Naive thymus-derived CD4-positive, alpha-beta T cell (primary cell): ENCODE measurements at regions of chr7 and their contacts with region 1.

Region 1: GRCh38 chr7:151519765-151520418 is at the start of gene RHEB:
- DNase-seq: peak; percentile 93 to 99 (median 98)
- ATAC-seq: peak; percentile 91
- H3K4me3 ChIP-seq: peak within 1 kb of the TSS; percentile 91
- H3K4me3 Mint-ChIP-seq: peak within 1 kb of the TSS; percentile 87 to 97 (median 94)
- H3K27ac ChIP-seq: peak within 1 kb of the TSS; percentile 88
- H3K27ac Mint-ChIP-seq: peak within 1 kb of the TSS; percentile 94 to 99 (median 98)
- H3K4me1 ChIP-seq: peaks cover 24 to 26% of the 10 kb centered on the region in 2 donors
- H3K4me1 Mint-ChIP-seq: peaks cover 32 to 44% (median 36%) of the 10 kb centered on the region in 7 donors
- H3K27me3 ChIP-seq: no peaks in the 10 kb centered on the region
- H3K27me3 Mint-ChIP-seq: peaks cover 0 to 12% (median 0%) of the 10 kb centered on the region in 5 donors
- total RNA-seq, gene RHEB: 31.2 to 62.6 (median 40.2) TPM

Region 2: GRCh38 chr7:151226875-151227782 is 292.8 kb before region 1 on chr7 and contains the start of gene ABCF2:
- CTCF ChIA-PET with region 1: no interaction called
- POLR2A ChIA-PET with region 1: no interaction called
- intact Hi-C with region 1: loop called (anchors 2 to 5 kb)
- DNase-seq: peak; percentile 91 to 98 (median 97)
- ATAC-seq: peak; percentile 99
- H3K4me3 ChIP-seq: peak within 1 kb of the TSS; percentile 91
- H3K4me3 Mint-ChIP-seq: peak within 1 kb of the TSS; percentile 90 to 99 (median 97)
- H3K27ac ChIP-seq: peak within 1 kb of the TSS; percentile 84
- H3K27ac Mint-ChIP-seq: peak within 1 kb of the TSS; percentile 68 to 97 (median 95)
- H3K4me1 ChIP-seq: peaks cover 16 to 25% of the 10 kb centered on the region in 2 donors
- H3K4me1 Mint-ChIP-seq: peaks cover 31 to 55% (median 47%) of the 10 kb centered on the region in 7 donors
- H3K27me3 ChIP-seq: no peaks in the 10 kb centered on the region
- H3K27me3 Mint-ChIP-seq: peaks cover 0 to 6% (median 0%) of the 10 kb centered on the region in 5 donors
- total RNA-seq, gene ABCF2: 17.2 to 37.8 (median 27.7) TPM

Region 3: GRCh38 chr7:151315038-151315655 is 204.7 kb before region 1 on chr7:
- CTCF ChIA-PET with region 1: no interaction called
- POLR2A ChIA-PET with region 1: no interaction called
- intact Hi-C with region 1: no loop called
- DNase-seq: peak; percentile 48 to 87 (median 82)
- ATAC-seq: peak; percentile 96
- H3K4me3 ChIP-seq: no peak overlapping the region
- H3K4me3 Mint-ChIP-seq: peak overlapping the region in 8 of 10 donors; percentile 1 to 80 (median 56)
- H3K27ac ChIP-seq: no peak overlapping the region
- H3K27ac Mint-ChIP-seq: peak overlapping the region in 6 of 9 donors; percentile 33 to 81 (median 58)
- H3K4me1 ChIP-seq: no peaks in the 10 kb centered on the region
- H3K4me1 Mint-ChIP-seq: peaks cover 0 to 11% (median 5%) of the 10 kb centered on the region in 7 donors
- H3K27me3 ChIP-seq: no peaks in the 10 kb centered on the region
- H3K27me3 Mint-ChIP-seq: no peaks in the 10 kb centered on the region

Region 4: GRCh38 chr7:151472644-151473380 is 47.1 kb before region 1 on chr7:
- CTCF ChIA-PET with region 1: no interaction called
- POLR2A ChIA-PET with region 1: no interaction called
- intact Hi-C with region 1: loop called in 1 of 2 experiments (anchors 5 kb)
- DNase-seq: no peak
- ATAC-seq: no peak
- H3K4me3 ChIP-seq: no peak overlapping the region
- H3K4me3 Mint-ChIP-seq: peak overlapping the region in 1 of 10 donors; percentile 22
- H3K27ac ChIP-seq: no peak overlapping the region
- H3K27ac Mint-ChIP-seq: peak overlapping the region in 1 of 9 donors; percentile 39
- H3K4me1 ChIP-seq: peaks cover 8 to 15% of the 10 kb centered on the region in 2 donors
- H3K4me1 Mint-ChIP-seq: peaks cover 15 to 57% (median 33%) of the 10 kb centered on the region in 7 donors
- H3K27me3 ChIP-seq: no peaks in the 10 kb centered on the region
- H3K27me3 Mint-ChIP-seq: no peaks in the 10 kb centered on the region

Region 5: GRCh38 chr7:151537818-151538561 is 18.1 kb after region 1 on chr7:
- CTCF ChIA-PET with region 1: no interaction called
- POLR2A ChIA-PET with region 1: no interaction called
- intact Hi-C with region 1: no loop called
- DNase-seq: peak in 4 of 9 donors; percentile 20 to 42 (median 32)
- ATAC-seq: peak; percentile 47
- H3K4me3 ChIP-seq: no peak overlapping the region
- H3K4me3 Mint-ChIP-seq: peak overlapping the region in 4 of 10 donors; percentile 0 to 46 (median 26)
- H3K27ac ChIP-seq: no peak overlapping the region
- H3K27ac Mint-ChIP-seq: peak overlapping the region in 8 of 9 donors; percentile 6 to 87 (median 46)
- H3K4me1 ChIP-seq: no peaks in the 10 kb centered on the region
- H3K4me1 Mint-ChIP-seq: peaks cover 3 to 20% (median 14%) of the 10 kb centered on the region in 7 donors
- H3K27me3 ChIP-seq: peaks cover 0 to 3% of the 10 kb centered on the region in 2 donors
- H3K27me3 Mint-ChIP-seq: peaks cover 0 to 16% (median 5%) of the 10 kb centered on the region in 5 donors

Region 6: DNA sequence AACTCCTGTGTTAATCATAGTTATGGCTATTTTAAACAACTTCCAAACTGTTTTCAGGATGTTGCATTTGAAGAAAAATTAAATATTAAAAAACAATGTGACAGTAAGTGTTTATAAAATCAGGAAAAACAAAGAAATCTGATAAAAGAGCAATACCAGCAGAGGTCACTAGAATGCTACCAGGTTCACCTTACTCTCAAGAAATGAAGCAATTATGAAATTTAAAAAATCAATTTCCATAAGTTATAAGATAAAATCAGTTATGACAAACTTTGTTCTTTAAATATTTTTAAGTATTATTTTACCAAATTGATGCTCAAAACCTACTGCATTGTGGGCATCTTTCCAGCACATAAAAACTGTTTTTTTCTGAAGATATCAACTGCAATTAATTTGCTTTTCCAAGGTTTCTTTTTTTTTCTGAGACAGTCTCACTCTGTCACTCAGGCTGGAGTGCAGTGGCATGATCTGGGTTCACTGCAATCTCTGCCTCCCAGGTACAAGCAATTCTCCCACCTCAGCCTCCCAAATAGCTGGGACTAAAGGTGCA is 50.5 kb after region 1 on chr7:
- CTCF ChIA-PET with region 1: no interaction called
- POLR2A ChIA-PET with region 1: no interaction called
- intact Hi-C with region 1: loop called in 1 of 2 experiments (anchors 5 kb)
- DNase-seq: peak in 3 of 9 donors; percentile 2 to 12 (median 7)
- ATAC-seq: no peak
- H3K4me3 ChIP-seq: no peak overlapping the region
- H3K4me3 Mint-ChIP-seq: no peak overlapping the region
- H3K27ac ChIP-seq: no peak overlapping the region
- H3K27ac Mint-ChIP-seq: no peak overlapping the region
- H3K4me1 ChIP-seq: no peaks in the 10 kb centered on the region
- H3K4me1 Mint-ChIP-seq: peaks cover 0 to under 1% (median 0%) of the 10 kb centered on the region in 7 donors
- H3K27me3 ChIP-seq: no peaks in the 10 kb centered on the region
- H3K27me3 Mint-ChIP-seq: no peaks in the 10 kb centered on the region

Region 7: GRCh38 chr7:151782598-151783448 is 262.9 kb after region 1 on chr7:
- CTCF ChIA-PET with region 1: no interaction called
- POLR2A ChIA-PET with region 1: interaction called, 3 read pairs
- intact Hi-C with region 1: loop called in 1 of 2 experiments (anchors 1 kb)
- DNase-seq: peak; percentile 33 to 73 (median 56)
- ATAC-seq: peak; percentile 91
- H3K4me3 ChIP-seq: peak overlapping the region; percentile 57
- H3K4me3 Mint-ChIP-seq: peak overlapping the region; percentile 77 to 95 (median 88)
- H3K27ac ChIP-seq: peak overlapping the region; percentile 53
- H3K27ac Mint-ChIP-seq: peak overlapping the region in 8 of 9 donors; percentile 46 to 93 (median 82)
- H3K4me1 ChIP-seq: peaks cover 0 to 5% of the 10 kb centered on the region in 2 donors
- H3K4me1 Mint-ChIP-seq: peaks cover 10 to 25% (median 16%) of the 10 kb centered on the region in 7 donors
- H3K27me3 ChIP-seq: no peaks in the 10 kb centered on the region
- H3K27me3 Mint-ChIP-seq: peaks cover 0 to 2% (median 0%) of the 10 kb centered on the region in 5 donors

Region 8: GRCh38 chr7:152463709-152464311 is 943.9 kb after region 1 on chr7:
- CTCF ChIA-PET with region 1: no interaction called
- POLR2A ChIA-PET with region 1: no interaction called
- intact Hi-C with region 1: loop called in 1 of 2 experiments (anchors 10 kb)
- DNase-seq: peak; percentile 99 to 100 (median 100)
- ATAC-seq: peak; percentile 96
- H3K4me3 ChIP-seq: peak overlapping the region; percentile 82
- H3K4me3 Mint-ChIP-seq: peak overlapping the region; percentile 64 to 96 (median 92)
- H3K27ac ChIP-seq: peak overlapping the region; percentile 99
- H3K27ac Mint-ChIP-seq: peak overlapping the region in 7 of 9 donors; percentile 62 to 93 (median 88)
- H3K4me1 ChIP-seq: peaks cover 5% of the 10 kb centered on the region in 2 donors
- H3K4me1 Mint-ChIP-seq: peaks cover 5 to 17% (median 7%) of the 10 kb centered on the region in 7 donors
- H3K27me3 ChIP-seq: no peaks in the 10 kb centered on the region
- H3K27me3 Mint-ChIP-seq: no peaks in the 10 kb centered on the region